Natural killer cell (primary cell): ENCODE measurements at regions of chr7 and their contacts with region 1.

Region 1: GRCh38 chr7:21383227-21384220 is 44.4 kb upstream of the SP4 start:
- DNase-seq: peak in 1 of 2 donors; percentile 21
- ATAC-seq: peak; percentile 73 to 86 (median 84)
- H3K4me3 ChIP-seq: no peak overlapping the region
- H3K4me3 Mint-ChIP-seq: peak overlapping the region; percentile 83
- H3K27ac ChIP-seq: peak overlapping the region; percentile 76
- H3K27ac Mint-ChIP-seq: peak overlapping the region; percentile 87 to 94
- H3K4me1 ChIP-seq: peaks cover 13% of the 10 kb centered on the region
- H3K4me1 Mint-ChIP-seq: peaks cover 32 to 37% of the 10 kb centered on the region in 2 donors
- H3K27me3 ChIP-seq: no peaks in the 10 kb centered on the region
- H3K27me3 Mint-ChIP-seq: no peaks in the 10 kb centered on the region
- CTCF ChIP-seq: no peak

Region 2: GRCh38 chr7:21338728-21339164 is 44.8 kb before region 1 on chr7:
- intact Hi-C with region 1: loop called (anchors 2 kb)
- DNase-seq: peak; percentile 27 to 65
- ATAC-seq: peak; percentile 88 to 97 (median 96)
- H3K4me3 ChIP-seq: no peak overlapping the region
- H3K4me3 Mint-ChIP-seq: peak overlapping the region; percentile 72
- H3K27ac ChIP-seq: peak overlapping the region; percentile 65
- H3K27ac Mint-ChIP-seq: peak overlapping the region; percentile 88 to 94
- H3K4me1 ChIP-seq: peaks cover 12% of the 10 kb centered on the region
- H3K4me1 Mint-ChIP-seq: peaks cover 60 to 66% of the 10 kb centered on the region in 2 donors
- H3K27me3 ChIP-seq: no peaks in the 10 kb centered on the region
- H3K27me3 Mint-ChIP-seq: no peaks in the 10 kb centered on the region
- CTCF ChIP-seq: no peak

Region 3: DNA sequence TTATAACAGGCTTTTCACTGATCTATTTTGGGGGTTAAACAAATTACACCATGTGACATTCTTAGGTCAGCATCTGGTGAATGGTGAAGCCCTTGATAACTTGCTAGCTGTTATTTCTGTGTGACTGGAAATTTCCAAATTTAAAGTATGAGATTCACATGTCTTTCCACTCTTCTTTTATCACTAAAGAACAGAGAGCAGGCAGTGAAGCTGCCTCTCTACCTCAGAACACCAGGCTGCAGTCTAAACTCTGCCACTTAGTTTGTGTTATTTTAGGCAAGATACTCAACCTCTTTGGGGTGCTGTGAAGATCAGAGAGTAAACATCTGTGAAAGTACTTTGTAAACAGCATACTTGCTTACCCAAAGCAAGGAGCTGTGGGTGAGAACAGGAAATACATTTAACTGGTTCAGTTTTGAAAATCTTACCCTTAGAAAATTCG is 28.9 kb after region 1 on chr7:
- intact Hi-C with region 1: loop called (anchors 2 kb)
- DNase-seq: peak in 1 of 2 donors; percentile 49
- ATAC-seq: peak; percentile 81 to 92 (median 88)
- H3K4me3 ChIP-seq: no peak overlapping the region
- H3K4me3 Mint-ChIP-seq: peak overlapping the region; percentile 83
- H3K27ac ChIP-seq: peak overlapping the region; percentile 71
- H3K27ac Mint-ChIP-seq: peak overlapping the region; percentile 92 to 94
- H3K4me1 ChIP-seq: peaks cover 27% of the 10 kb centered on the region
- H3K4me1 Mint-ChIP-seq: peaks cover 27 to 56% of the 10 kb centered on the region in 2 donors
- H3K27me3 ChIP-seq: no peaks in the 10 kb centered on the region
- H3K27me3 Mint-ChIP-seq: no peaks in the 10 kb centered on the region
- CTCF ChIP-seq: no peak

Region 4: GRCh38 chr7:21427182-21427870 is 43.8 kb after region 1 on chr7:
- intact Hi-C with region 1: loop called (anchors 1 kb)
- DNase-seq: peak; percentile 98 to 99
- ATAC-seq: peak; percentile 75 to 90 (median 77)
- H3K4me3 ChIP-seq: peak overlapping the region; percentile 92
- H3K4me3 Mint-ChIP-seq: peak overlapping the region; percentile 99
- H3K27ac ChIP-seq: peak overlapping the region; percentile 91
- H3K27ac Mint-ChIP-seq: peak overlapping the region; percentile 99 to 100
- H3K4me1 ChIP-seq: peaks cover 27% of the 10 kb centered on the region
- H3K4me1 Mint-ChIP-seq: peaks cover 45 to 49% of the 10 kb centered on the region in 2 donors
- H3K27me3 ChIP-seq: no peaks in the 10 kb centered on the region
- H3K27me3 Mint-ChIP-seq: no peaks in the 10 kb centered on the region
- CTCF ChIP-seq: no peak